Activated CD4-positive, alpha-beta T cell treated with anti-CD3 and anti-CD28 coated beads, Interleukin-2, amount 10 ng/mL, durations not matched to agents 24 days and 14 days (primary cell): ENCODE measurements at regions of chr12 and their contacts with region 1.

Region 1: GRCh38 chr12:19683178-19683927 is 244.1 kb downstream of the AEBP2 start:
- DNase-seq: no peak
- H3K4me3 Mint-ChIP-seq: no peak overlapping the region
- H3K27ac Mint-ChIP-seq: no peak overlapping the region
- H3K4me1 Mint-ChIP-seq: peaks cover 37% of the 10 kb centered on the region
- H3K27me3 Mint-ChIP-seq: peaks cover 12% of the 10 kb centered on the region

Region 2: DNA sequence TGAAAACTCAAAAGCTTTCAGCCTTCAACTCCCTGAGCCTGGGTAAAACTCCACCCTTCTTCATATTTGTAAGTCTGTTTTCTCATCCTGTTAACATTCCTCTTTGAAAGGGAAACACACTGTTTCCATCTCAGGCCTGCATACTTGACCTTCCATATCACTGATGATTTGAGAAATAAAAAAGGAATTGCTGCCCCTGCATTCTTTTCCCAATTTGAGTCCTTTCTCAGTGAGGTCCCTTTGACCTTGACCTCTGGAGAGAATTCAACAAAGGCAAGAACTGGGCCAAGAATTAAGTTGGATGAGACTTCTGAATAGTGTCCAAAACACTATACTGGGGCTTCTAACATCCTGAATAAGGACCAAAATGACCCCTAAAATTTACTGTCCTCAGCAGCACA is 136.1 kb before region 1 on chr12:
- intact Hi-C with region 1: loop called (anchors 1 kb)
- DNase-seq: no peak
- H3K4me3 Mint-ChIP-seq: no peak overlapping the region
- H3K27ac Mint-ChIP-seq: no peak overlapping the region
- H3K4me1 Mint-ChIP-seq: peaks cover 4% of the 10 kb centered on the region
- H3K27me3 Mint-ChIP-seq: no peaks in the 10 kb centered on the region

Region 3: GRCh38 chr12:19694627-19695026 is 11.3 kb after region 1 on chr12:
- intact Hi-C with region 1: loop called (anchors 2 kb)
- DNase-seq: no peak
- H3K4me3 Mint-ChIP-seq: no peak overlapping the region
- H3K27ac Mint-ChIP-seq: peak overlapping the region; percentile 5
- H3K4me1 Mint-ChIP-seq: peaks cover 16% of the 10 kb centered on the region
- H3K27me3 Mint-ChIP-seq: peaks cover 10% of the 10 kb centered on the region